Breast epithelium (tissue), 4 donors: ENCODE measurements at regions of chr6 and their contacts with region 1.

Region 1: DNA sequence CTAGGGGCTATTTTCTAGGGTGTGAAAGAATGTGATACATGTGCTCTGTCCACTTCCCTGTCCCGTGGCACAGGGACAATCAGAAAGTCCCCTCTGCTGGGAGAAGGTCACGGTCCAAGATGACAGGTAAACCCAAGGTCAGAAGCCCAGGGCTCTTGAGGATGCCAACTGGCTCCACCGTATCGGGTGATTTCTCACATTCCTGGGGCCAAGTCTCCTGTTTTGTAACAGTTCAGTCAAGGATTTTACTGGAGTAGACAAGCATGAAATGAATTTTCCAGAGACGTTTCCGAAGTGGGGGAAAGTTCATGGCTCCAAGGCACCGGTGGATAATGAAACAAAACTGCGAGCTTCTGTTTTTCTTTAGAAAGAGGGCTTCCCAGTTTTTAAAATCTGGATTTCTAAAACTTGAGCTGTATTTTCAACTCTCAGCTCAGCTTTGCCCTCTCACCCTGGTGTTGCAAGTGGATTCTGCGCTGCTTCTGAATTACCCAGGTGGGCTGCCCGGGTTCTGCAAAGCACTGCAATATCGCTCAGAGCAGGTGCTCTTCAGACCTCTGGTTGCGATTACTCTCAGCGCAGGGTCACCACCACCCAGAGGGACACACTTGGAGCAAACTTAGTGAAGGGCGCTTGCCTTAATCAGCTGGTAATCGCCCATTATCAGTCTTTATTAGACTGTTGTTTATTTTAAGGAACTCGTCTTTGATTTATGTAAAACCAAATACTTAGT is 64.4 kb upstream of the TMEM170B start:
- DNase-seq: no peak
- H3K4me3 ChIP-seq: peak overlapping the region; percentile 5 to 41 (median 18)
- H3K27ac ChIP-seq: peak overlapping the region; percentile 35 to 44
- H3K4me1 ChIP-seq: no peaks in the 10 kb centered on the region
- H3K27me3 ChIP-seq: no peaks in the 10 kb centered on the region
- CTCF ChIP-seq: no peak
- POLR2A ChIP-seq: no peak

Region 2: DNA sequence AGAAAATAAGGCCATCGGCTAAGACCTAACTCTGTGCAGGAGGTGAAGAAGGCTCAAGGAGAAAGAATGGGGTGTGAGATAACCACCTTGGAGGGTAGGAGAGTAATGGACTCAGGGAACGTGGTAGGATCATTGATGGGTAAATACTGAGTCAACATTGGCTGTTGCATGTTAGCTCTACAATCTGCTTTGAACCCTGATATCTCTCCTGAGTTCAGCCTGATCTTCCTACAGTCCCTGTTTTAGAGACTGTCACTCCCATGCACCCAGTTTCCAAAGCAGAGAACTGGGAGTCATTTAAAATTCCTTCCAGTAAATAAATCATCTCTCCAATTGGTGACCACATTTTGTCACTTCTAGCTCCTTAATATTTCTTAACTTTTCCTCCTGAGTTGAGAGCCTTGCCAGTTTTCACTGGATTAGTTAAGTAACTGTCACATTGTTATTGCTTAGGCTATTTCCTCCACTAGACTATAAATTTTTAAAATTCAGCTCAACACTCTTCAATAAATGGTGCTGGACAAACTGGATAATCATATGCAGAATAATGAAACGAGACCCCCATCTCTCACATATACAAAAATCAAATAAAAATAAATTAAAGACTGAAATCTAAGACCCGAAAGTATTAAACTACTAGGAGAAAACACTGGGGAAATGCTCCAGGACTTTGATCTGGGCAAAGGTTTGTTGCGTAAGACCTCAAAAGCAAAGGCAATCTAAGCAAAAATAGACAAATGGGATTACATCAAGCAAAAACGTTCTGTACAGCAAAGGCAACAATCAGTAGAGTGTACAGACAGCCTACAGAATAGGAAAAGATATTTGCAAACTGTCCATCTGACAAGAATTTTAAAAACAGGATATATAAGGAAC is 74.5 kb before region 1 on chr6:
- intact Hi-C with region 1: loop called (anchors 2 kb)
- DNase-seq: no peak
- H3K4me3 ChIP-seq: no peak overlapping the region
- H3K27ac ChIP-seq: peak overlapping the region in 1 of 2 donors; percentile 25
- H3K4me1 ChIP-seq: peaks cover 0 to 6% of the 10 kb centered on the region in 2 donors
- H3K27me3 ChIP-seq: no peaks in the 10 kb centered on the region
- CTCF ChIP-seq: no peak
- POLR2A ChIP-seq: no peak